Pancreas (tissue), 10 donors: ENCODE measurements at regions of chr10 and their contacts with region 1.

Region 1: DNA sequence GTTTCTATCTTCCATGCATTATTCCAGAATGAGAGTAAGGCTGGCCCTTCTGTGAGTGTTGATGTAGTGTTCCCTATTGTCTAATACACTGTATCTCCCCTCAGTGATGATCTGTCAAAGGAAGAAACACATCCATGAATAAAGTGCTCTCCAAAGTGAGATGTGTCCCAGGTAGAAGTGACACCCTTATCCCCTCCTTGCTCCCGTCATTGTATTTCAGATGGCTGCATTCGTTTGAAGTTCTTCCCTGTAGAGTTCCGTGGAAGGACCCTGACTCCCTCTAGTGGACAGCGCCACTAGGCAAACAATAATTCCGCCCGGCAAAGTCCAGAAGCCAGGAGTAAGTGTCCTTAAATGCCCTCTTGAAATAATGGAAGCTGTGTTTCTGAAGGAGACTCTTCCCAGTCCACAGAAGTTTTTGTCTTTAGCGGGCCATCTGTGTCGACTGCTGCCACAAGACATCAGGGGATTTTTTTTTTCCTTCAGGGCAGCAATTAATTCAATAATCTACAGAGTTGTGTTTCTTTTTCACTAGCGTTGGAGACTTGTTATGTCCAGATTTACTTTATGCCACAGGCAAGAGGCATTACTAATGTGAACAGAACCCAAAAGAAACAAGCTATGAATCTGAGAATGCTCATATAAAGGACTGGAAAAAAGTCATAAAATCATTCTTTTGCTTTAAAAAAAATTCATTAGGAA is 64.6 kb downstream of the THNSL1 start:
- DNase-seq: peak; percentile 79 to 90 (median 80)
- ATAC-seq: peak; percentile 81 to 93 (median 92)
- H3K4me3 ChIP-seq: no peak overlapping the region
- H3K27ac ChIP-seq: peak overlapping the region in 2 of 4 donors; percentile 56 to 91
- H3K4me1 ChIP-seq: peaks cover 14 to 35% (median 17%) of the 10 kb centered on the region in 3 donors
- H3K27me3 ChIP-seq: no peaks in the 10 kb centered on the region
- CTCF ChIP-seq: peak; percentile 80 to 87 (median 82)

Region 2: GRCh38 chr10:24834307-24835162 is 246.5 kb before region 1 on chr10:
- intact Hi-C with region 1: no loop called
- DNase-seq: no peak
- ATAC-seq: no peak
- H3K4me3 ChIP-seq: no peak overlapping the region
- H3K27ac ChIP-seq: no peak overlapping the region
- H3K4me1 ChIP-seq: no peaks in the 10 kb centered on the region
- H3K27me3 ChIP-seq: no peaks in the 10 kb centered on the region
- CTCF ChIP-seq: no peak

Region 3: DNA sequence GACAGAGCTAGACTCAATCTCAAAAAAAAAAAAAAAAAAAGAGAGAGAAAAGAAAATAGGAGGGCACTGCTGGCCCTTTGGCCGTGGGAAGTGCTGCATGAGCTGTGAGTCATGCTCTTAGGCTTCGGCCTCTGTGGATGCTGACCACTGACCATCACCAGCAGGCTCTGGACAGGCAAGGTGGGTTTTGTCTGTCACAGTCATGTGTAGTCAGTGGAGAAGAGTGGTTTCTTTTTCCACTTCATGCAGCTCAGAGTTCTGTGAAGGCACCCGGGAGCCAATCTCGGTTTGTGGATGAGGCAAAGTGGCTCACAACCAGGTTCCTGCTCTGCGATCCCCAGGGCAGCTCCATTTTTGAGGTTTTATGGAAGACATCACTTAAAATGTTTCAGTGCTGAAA is 186.7 kb before region 1 on chr10:
- intact Hi-C with region 1: no loop called
- DNase-seq: no peak
- ATAC-seq: peak in 1 of 4 donors; percentile 66
- H3K4me3 ChIP-seq: no peak overlapping the region
- H3K27ac ChIP-seq: no peak overlapping the region
- H3K4me1 ChIP-seq: no peaks in the 10 kb centered on the region
- H3K27me3 ChIP-seq: no peaks in the 10 kb centered on the region
- CTCF ChIP-seq: no peak

Region 4: DNA sequence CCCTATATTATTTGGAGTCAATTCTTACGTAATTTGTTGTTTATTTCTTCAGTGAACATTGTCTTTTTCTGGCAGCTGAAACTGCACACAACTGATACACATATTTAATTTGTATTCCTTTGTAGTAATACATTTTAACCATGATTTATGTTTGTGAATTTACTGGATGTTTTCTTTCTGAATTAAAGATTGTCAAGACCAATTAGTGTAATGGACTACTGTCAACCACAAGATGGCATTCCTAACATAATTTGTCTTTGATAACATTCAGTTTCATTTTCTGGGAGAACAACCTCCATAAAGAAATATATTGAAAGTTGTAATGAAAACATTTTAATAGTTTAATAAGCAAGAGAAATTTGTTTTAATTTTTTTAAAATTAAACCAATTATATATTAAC is 54.6 kb before region 1 on chr10:
- intact Hi-C with region 1: loop called in 1 of 3 experiments (anchors 10 kb)
- DNase-seq: no peak
- ATAC-seq: peak in 3 of 4 donors; percentile 61 to 74 (median 68)
- H3K4me3 ChIP-seq: no peak overlapping the region
- H3K27ac ChIP-seq: no peak overlapping the region
- H3K4me1 ChIP-seq: no peaks in the 10 kb centered on the region
- H3K27me3 ChIP-seq: no peaks in the 10 kb centered on the region
- CTCF ChIP-seq: peak in 1 of 4 donors; percentile 17